T-cell (primary cell): ENCODE measurements at regions of chr19 and their contacts with region 1.

Region 1: DNA sequence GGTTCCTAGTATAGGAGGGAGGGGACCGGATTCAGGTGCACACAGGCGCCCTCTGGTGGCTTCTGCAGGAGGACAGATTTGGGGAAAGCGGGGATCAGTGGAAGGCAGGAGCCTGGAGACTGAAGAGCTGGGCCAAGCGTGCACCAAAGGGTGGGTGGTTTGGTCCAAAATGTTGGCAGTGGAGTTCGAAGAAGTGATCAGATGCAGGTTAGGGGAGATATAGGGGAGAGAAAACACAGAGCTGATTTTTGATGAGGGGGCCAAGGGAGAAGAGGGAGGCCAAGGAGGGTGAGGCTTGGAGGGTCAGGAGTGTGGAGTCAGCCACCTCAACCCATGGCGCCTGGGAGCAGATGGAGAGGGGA is 6.8 kb upstream of the CARM1 start:
- DNase-seq: peak; percentile 46 to 89 (median 72)
- ATAC-seq: peak; percentile 92 to 93 (median 92)
- H3K4me3 ChIP-seq: no peak overlapping the region
- H3K4me3 Mint-ChIP-seq: no peak overlapping the region
- H3K27ac ChIP-seq: no peak overlapping the region
- H3K27ac Mint-ChIP-seq: peak overlapping the region in 1 of 2 donors; percentile 66
- H3K4me1 ChIP-seq: peaks cover 0 to 10% of the 10 kb centered on the region in 2 experiments
- H3K4me1 Mint-ChIP-seq: peaks cover 12 to 20% (median 17%) of the 10 kb centered on the region in 3 donors
- H3K27me3 ChIP-seq: no peaks in the 10 kb centered on the region
- H3K27me3 Mint-ChIP-seq: no peaks in the 10 kb centered on the region

Region 2: DNA sequence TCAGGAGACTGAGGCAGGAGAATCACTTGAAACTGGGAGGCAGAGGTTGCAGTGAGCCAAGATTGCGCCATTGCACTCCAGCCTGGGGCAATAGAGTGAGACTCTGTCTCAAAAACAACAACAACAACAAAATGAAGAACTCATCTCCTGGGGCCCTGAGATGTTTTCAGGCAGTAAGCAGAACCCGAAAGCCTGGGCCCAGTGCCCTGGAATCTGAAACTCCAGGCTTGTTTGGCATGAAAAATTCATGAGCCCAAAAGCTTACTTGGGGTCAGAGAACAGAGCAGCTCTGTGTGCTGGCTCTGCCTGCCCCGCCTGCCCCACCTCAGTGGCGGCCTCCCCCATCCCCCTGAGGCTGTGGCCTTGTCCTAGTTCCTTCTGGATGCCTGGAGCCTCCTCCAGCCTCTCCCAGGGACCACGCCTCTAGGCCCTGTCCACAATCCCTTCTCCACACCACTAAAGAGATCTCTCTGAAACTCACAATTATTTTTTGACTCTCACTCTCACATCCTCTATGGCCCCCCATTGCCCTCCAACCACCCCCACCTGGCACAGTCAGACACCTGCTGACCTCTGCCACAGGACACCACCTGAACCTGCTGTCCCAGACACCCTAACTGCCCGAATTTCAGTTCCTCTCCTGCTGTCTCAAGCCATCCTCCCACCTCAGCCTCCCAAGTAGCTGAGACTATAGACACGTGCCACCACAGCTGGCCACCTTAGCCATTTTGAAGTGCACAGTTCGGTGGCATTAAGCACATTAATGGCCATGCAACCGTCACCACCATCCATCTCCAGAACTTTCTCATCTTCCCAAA is 270.5 kb before region 1 on chr19:
- CTCF ChIA-PET with region 1: no interaction called
- POLR2A ChIA-PET with region 1: interaction called in 1 of 2 experiments, 11 read pairs
- DNase-seq: no peak
- ATAC-seq: no peak
- H3K4me3 ChIP-seq: no peak overlapping the region
- H3K4me3 Mint-ChIP-seq: no peak overlapping the region
- H3K27ac ChIP-seq: no peak overlapping the region
- H3K27ac Mint-ChIP-seq: no peak overlapping the region
- H3K4me1 ChIP-seq: peaks cover 3 to 23% of the 10 kb centered on the region in 2 experiments
- H3K4me1 Mint-ChIP-seq: peaks cover 13 to 20% (median 18%) of the 10 kb centered on the region in 3 donors
- H3K27me3 ChIP-seq: peaks cover 0 to 21% of the 10 kb centered on the region in 2 experiments
- H3K27me3 Mint-ChIP-seq: peaks cover 0 to 4% of the 10 kb centered on the region in 2 donors

Region 3: DNA sequence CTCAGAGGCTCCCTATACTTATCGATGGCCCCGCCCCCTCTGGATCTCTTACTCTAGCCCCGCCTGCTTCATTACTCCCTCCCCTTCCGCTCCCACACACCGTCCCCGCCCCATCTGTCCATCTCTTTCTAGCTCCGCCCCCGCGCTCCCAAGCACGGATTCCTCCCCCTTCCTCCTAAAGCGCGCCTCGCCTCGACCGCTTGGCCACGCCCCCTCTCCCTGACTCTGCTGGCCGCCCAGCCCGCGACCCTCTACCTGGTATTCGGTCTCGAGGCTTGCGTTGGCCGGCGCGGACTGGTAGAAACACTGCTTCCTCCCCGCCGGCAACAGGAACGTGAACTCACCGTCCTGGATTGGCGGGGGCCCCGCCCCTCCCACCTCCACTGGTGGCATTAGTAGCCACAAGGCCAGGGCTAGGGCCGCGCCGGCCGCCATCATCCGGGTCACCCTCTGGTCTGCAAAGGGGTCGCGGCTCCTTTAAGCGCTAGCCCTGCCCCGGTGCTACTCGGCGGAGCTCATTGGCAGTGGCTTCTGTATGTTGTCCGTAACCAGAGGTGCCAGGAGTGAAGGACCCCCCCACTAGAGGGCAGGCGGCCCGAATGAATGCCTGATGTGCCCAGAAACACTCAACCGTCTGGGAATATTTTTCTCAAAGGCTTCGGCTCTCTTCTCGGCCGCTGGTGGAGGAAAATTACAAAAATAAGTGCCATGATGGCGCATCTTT is 28.6 kb before region 1 on chr19 and contains the start of gene TMED1:
- CTCF ChIA-PET with region 1: interaction called in 1 of 2 experiments, 31 read pairs
- POLR2A ChIA-PET with region 1: interaction called in 1 of 2 experiments, 3 read pairs
- DNase-seq: peak; percentile 85 to 98 (median 94)
- ATAC-seq: peak; percentile 87 to 92 (median 90)
- H3K4me3 ChIP-seq: peak within 1 kb of the TSS; percentile 76 to 95
- H3K4me3 Mint-ChIP-seq: peak within 1 kb of the TSS; percentile 97 to 99 (median 98)
- H3K27ac ChIP-seq: peak within 1 kb of the TSS; percentile 97
- H3K27ac Mint-ChIP-seq: peak within 1 kb of the TSS; percentile 99 to 100
- H3K4me1 ChIP-seq: peaks cover 2 to 25% of the 10 kb centered on the region in 2 experiments
- H3K4me1 Mint-ChIP-seq: peaks cover 12 to 17% (median 16%) of the 10 kb centered on the region in 3 donors
- H3K27me3 ChIP-seq: no peaks in the 10 kb centered on the region
- H3K27me3 Mint-ChIP-seq: no peaks in the 10 kb centered on the region
- total RNA-seq, gene TMED1: 6.1 to 11.4 (median 9.5) TPM

Region 4: GRCh38 chr19:11018179-11018578 is 153.7 kb after region 1 on chr19:
- CTCF ChIA-PET with region 1: no interaction called
- POLR2A ChIA-PET with region 1: no interaction called
- DNase-seq: no peak
- ATAC-seq: no peak
- H3K4me3 ChIP-seq: no peak overlapping the region
- H3K4me3 Mint-ChIP-seq: no peak overlapping the region
- H3K27ac ChIP-seq: no peak overlapping the region
- H3K27ac Mint-ChIP-seq: no peak overlapping the region
- H3K4me1 ChIP-seq: no peaks in the 10 kb centered on the region
- H3K4me1 Mint-ChIP-seq: no peaks in the 10 kb centered on the region
- H3K27me3 ChIP-seq: no peaks in the 10 kb centered on the region
- H3K27me3 Mint-ChIP-seq: no peaks in the 10 kb centered on the region